Breast epithelium (tissue), 4 donors: ENCODE measurements at regions of chr3 and their contacts with region 1.

Region 1: GRCh38 chr3:160641665-160642309 is 35.2 kb upstream of the ARL14 start:
- DNase-seq: no peak
- H3K4me3 ChIP-seq: no peak overlapping the region
- H3K27ac ChIP-seq: no peak overlapping the region
- H3K4me1 ChIP-seq: no peaks in the 10 kb centered on the region
- H3K27me3 ChIP-seq: no peaks in the 10 kb centered on the region
- CTCF ChIP-seq: no peak
- POLR2A ChIP-seq: no peak

Region 2: GRCh38 chr3:160661660-160662059 is 19.9 kb after region 1 on chr3:
- intact Hi-C with region 1: loop called (anchors 2 kb)
- DNase-seq: no peak
- H3K4me3 ChIP-seq: no peak overlapping the region
- H3K27ac ChIP-seq: no peak overlapping the region
- H3K4me1 ChIP-seq: no peaks in the 10 kb centered on the region
- H3K27me3 ChIP-seq: no peaks in the 10 kb centered on the region
- CTCF ChIP-seq: no peak
- POLR2A ChIP-seq: no peak

Region 3: DNA sequence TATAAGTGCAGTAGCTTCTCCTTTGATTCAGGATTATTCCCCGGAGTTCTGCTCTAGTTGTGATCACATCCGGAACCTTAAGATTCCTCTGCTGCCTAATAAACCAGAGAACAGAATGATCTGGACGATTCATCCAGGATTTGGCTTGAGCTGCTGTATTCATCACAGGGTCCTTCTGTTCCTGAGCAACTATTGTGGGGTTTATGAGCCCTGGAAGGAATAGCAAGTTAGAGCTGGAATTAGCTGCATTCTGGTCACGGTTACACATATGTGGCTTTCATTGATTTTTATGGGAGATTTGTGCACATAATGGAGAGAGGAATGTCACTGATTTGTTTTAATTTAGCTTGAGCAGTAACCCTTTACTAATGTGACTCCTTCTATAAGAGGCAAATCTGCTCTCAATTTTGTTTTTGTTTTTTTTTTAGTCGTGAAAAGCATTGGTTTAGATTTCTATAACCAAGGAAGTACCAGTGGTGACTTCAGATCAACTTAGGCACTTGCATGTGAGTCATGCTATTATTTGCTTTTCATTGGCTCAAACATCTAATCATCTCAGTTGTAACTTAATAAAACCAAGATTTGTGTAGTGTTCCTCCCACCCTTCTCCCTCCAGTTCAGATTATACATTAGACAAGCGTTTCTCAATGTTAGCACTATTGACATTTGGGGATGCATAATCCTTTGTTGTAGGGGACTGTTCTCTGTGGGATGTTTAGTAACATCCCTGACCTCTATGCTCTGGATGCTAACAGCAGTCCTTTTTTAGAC is 1003.3 kb after region 1 on chr3:
- intact Hi-C with region 1: no loop called
- DNase-seq: no peak
- H3K4me3 ChIP-seq: no peak overlapping the region
- H3K27ac ChIP-seq: no peak overlapping the region
- H3K4me1 ChIP-seq: no peaks in the 10 kb centered on the region
- H3K27me3 ChIP-seq: no peaks in the 10 kb centered on the region
- CTCF ChIP-seq: no peak
- POLR2A ChIP-seq: no peak